ENCODE measurements at regions of chr3 and their contacts with region 1.

Region 1: DNA sequence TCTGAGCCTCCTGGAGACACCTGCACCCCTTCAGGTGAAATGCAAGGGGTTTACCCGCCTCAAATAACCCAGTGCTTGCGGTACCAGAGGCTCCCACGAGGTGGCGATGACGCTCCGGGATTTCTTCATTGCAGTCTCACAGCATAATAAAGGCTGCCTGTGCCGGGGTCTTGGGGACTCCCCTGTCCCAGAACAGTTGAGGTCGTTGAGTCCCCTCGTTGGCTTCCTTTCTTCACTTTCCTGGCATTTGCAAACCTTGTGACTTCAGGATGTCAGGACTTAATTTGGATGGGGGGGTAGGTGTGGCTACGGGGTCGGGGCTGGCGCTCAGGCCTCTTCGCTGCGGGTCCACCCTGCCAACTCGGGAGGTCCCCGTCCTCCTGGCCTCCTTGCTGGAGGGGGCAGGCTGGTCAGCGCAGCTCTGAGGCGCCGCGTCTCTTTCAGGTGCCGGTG is 1.3 kb downstream of the GNAT1 start:
- DNase-seq: peak; percentile 82
- ATAC-seq: peak; percentile 57
- H3K4me3 ChIP-seq: no peak overlapping the region
- H3K27ac ChIP-seq: no peak overlapping the region
- H3K4me1 ChIP-seq: peaks cover 11% of the 10 kb centered on the region
- H3K27me3 ChIP-seq: peaks cover 25% of the 10 kb centered on the region
- CTCF ChIP-seq: peak; percentile 92

Region 2: GRCh38 chr3:49998326-49998725 is 194.4 kb before region 1 on chr3:
- intact Hi-C with region 1: no loop called
- DNase-seq: no peak
- ATAC-seq: no peak
- H3K4me3 ChIP-seq: no peak overlapping the region
- H3K27ac ChIP-seq: no peak overlapping the region
- H3K4me1 ChIP-seq: no peaks in the 10 kb centered on the region
- H3K27me3 ChIP-seq: no peaks in the 10 kb centered on the region
- CTCF ChIP-seq: no peak

Region 3: DNA sequence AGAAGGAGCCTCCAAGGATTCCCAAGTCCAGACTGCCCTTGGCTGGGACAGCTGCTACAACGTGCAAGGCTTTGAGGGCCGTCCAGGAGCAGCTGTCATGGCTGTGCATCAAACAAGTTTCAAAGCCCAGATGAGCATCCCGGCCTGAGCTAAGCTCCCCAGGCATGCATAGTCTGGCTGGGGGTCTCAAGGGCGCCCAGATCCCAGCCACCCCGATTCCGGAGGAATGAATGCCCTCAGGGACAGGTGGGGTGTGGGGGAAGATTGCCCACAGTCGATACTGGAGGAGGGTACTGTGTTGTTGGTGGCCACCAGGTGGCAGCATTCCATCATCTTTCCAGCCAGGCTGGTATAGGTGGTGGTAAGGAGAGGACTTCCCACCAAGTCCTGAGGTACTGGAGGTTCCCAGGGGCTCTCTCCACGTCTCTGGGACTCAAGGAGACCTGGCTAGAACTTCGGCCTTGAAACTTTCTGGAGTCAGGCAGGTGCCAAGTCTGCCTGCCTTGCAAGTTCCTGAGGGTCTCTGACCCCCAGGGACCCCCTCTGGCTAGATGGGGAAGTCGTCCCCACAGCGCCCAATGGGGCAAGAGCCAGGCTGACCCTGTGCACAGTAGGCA is 71.2 kb before region 1 on chr3:
- intact Hi-C with region 1: loop called (anchors 5 kb)
- DNase-seq: peak; percentile 82
- ATAC-seq: peak; percentile 83
- H3K4me3 ChIP-seq: no peak overlapping the region
- H3K27ac ChIP-seq: no peak overlapping the region
- H3K4me1 ChIP-seq: peaks cover 10% of the 10 kb centered on the region
- H3K27me3 ChIP-seq: no peaks in the 10 kb centered on the region
- CTCF ChIP-seq: peak; percentile 85

Region 4: DNA sequence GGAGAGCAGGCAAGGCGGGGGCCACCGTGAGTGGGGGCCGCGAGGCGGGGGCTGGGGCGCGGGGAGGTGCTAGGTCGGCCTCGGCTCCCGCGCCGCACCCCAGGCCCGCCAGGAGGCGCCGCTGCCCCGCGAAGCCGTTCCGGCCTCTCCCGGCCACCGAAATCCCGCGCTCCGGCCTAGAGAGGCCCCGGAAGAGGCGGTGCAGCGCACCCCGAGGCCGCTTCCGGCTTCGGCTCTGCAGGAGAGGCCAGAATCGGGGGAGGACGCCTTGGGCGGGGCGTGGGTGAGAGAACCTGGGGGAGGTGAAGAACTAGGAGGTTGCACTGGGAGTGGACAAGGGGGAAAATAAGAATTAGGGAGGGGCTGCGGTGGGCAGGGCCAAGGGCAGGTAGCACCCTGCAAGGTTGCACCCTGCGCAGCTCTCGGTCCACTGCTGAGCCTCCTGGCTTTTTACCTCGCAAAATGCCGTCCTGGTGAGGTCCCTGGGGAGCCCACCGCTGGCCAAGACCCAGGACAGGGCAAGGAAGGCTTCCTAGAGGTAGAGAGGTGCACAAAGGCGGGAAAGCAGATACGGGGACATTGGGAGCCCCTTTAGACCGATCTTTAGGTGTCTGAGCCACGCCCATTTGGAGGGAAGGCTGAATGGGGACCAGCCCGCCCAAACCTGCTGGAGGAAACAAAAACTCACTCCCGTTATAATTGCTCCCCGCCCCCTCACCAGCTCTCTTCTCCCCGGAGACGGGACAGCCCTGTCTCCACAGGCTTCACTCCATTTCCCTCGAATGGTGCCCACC is 34.9 kb after region 1 on chr3:
- intact Hi-C with region 1: loop called (anchors 5 kb)
- DNase-seq: peak; percentile 98
- ATAC-seq: peak; percentile 93
- H3K4me3 ChIP-seq: peak overlapping the region; percentile 77
- H3K27ac ChIP-seq: peak overlapping the region; percentile 84
- H3K4me1 ChIP-seq: peaks cover 20% of the 10 kb centered on the region
- H3K27me3 ChIP-seq: no peaks in the 10 kb centered on the region
- CTCF ChIP-seq: peak; percentile 88

Region 5: GRCh38 chr3:50272911-50273693 is 80.4 kb after region 1 on chr3:
- intact Hi-C with region 1: loop called (anchors 5 kb)
- DNase-seq: peak; percentile 94
- ATAC-seq: peak; percentile 84
- H3K4me3 ChIP-seq: peak overlapping the region; percentile 37
- H3K27ac ChIP-seq: no peak overlapping the region
- H3K4me1 ChIP-seq: peaks cover 30% of the 10 kb centered on the region
- H3K27me3 ChIP-seq: peaks cover 7% of the 10 kb centered on the region
- CTCF ChIP-seq: peak; percentile 98

Region 6: GRCh38 chr3:50298836-50299637 is 106.3 kb after region 1 on chr3 and contains the starts of genes HYAL3 and NAA80:
- intact Hi-C with region 1: no loop called
- DNase-seq: peak; percentile 99
- ATAC-seq: peak; percentile 89
- H3K4me3 ChIP-seq: peak within 1 kb of the TSS; percentile 65
- H3K27ac ChIP-seq: peak within 1 kb of the TSS; percentile 87
- H3K4me1 ChIP-seq: peaks cover 33% of the 10 kb centered on the region
- H3K27me3 ChIP-seq: no peaks in the 10 kb centered on the region
- CTCF ChIP-seq: peak; percentile 47
- total RNA-seq, gene HYAL3: 2.8 TPM
- total RNA-seq, gene NAA80: 12.5 TPM

Region 7: DNA sequence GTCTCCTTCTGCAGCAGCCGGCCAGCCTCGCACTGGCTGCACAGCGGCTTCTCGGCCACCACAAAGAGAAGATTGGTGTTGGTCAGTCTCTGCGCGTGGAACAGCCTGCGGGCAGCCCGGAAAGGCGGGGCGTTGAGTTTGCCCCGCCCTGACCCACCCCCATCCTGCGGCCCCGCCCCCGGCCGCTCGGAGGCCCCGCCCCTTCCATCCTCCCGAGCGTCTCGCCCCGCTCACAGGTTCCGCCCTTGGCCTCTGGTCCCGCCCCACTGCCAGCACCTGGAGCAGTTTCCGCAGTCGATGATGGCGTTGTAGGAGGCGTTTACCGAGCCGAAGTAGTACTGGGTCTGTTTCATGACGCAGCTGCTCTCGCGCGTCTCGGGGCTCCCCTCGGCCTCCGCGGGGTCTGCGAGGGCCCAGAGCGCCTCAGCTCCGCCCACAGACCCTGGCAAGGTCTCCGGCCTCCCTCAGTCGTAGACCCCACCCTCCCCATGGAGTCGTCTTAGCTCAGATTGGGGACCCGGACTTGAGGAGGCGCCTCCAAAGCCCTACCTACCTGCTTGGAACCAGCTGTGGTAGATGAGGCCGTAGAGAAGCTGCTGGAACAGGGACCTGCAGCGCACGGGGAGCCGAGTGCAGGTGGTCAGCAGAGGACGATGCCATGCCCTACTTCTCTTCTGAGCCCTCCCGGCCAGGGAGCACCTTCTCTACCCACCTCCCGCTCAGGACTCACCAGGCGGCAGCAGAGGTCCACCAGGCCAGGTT is 172.5 kb after region 1 on chr3:
- intact Hi-C with region 1: no loop called
- DNase-seq: peak; percentile 89
- ATAC-seq: peak; percentile 83
- H3K4me3 ChIP-seq: peak overlapping the region; percentile 55
- H3K27ac ChIP-seq: no peak overlapping the region
- H3K4me1 ChIP-seq: peaks cover 7% of the 10 kb centered on the region
- H3K27me3 ChIP-seq: no peaks in the 10 kb centered on the region
- CTCF ChIP-seq: no peak

Measured in upper lobe of right lung (tissue), 1 donor.